AG04449 (cell line): ENCODE measurements at regions of chr6 and their contacts with region 1.

Region 1: GRCh38 chr6:152484806-152485205 is 152.4 kb downstream of the SYNE1 start:
- DNase-seq: no peak
- H3K4me3 ChIP-seq: no peak overlapping the region
- CTCF ChIP-seq: no peak

Region 2: GRCh38 chr6:152290693-152291092 is 194.1 kb before region 1 on chr6:
- CTCF ChIA-PET with region 1: no interaction called
- POLR2A ChIA-PET with region 1: no interaction called
- DNase-seq: no peak
- H3K4me3 ChIP-seq: no peak overlapping the region
- CTCF ChIP-seq: no peak

Region 3: DNA sequence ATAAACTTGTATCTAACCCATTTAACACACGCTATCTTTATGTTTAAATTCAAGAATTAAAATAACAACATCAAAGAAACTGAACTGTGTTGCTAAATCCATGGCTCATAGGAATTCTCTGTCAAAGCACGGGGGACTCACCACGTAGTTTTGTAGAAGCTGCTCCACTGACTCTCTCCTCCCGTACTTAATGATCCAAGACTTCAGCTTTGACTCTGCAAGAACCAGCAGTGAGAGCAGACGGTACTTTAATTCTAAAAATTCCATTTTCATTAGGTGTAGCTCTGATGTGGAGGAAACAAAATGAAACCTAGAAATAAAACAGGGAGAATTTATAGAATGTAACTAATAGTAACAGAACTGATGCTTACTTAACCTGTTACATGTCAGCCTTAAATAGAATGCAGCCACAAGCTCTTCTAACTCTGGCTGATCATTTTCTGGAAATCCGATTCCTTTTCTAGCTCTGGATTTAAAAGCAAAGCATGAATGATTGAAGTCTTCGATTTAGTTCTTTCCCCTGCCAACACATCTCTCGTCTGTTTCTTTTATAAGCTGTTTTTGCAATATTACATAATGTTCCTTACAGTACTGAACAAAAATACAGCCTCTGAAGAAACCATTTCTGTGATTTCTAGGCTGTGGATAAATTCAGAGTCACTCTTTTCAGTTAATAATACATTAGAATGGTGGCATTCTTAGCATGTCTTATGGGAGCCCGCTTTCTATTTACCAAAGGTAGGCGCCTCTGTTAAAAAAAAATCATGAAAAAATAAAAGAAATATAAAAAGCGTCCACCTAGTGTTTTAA is 13.1 kb before region 1 on chr6:
- CTCF ChIA-PET with region 1: interaction called, 20 read pairs
- POLR2A ChIA-PET with region 1: no interaction called
- DNase-seq: no peak
- H3K4me3 ChIP-seq: peak overlapping the region; percentile 10; the same call in 1 of the 2 replicates
- CTCF ChIP-seq: no peak

Region 4: GRCh38 chr6:152642989-152643388 is 158.2 kb after region 1 on chr6:
- CTCF ChIA-PET with region 1: interaction called, 54 read pairs
- POLR2A ChIA-PET with region 1: no interaction called
- DNase-seq: no peak
- H3K4me3 ChIP-seq: no peak overlapping the region
- CTCF ChIP-seq: peak; percentile 73

Region 5: DNA sequence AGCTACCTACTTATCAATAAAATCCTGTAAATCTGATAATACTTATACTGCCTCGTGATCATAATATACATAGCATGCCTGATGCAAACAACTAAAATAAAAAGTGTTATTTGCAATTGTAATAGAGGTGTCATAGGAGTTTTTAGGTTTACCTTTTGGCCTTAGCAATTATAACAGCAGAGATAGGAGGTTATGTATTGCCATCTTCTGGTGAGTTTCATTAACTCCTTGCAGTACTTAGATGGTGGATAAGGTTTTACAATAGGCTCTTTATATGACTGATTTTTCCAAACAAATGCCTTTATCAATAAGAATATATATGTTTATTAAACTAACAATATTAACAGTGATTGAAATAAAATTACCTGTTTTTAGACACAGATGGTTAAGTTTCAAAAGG is 185.1 kb after region 1 on chr6:
- CTCF ChIA-PET with region 1: interaction called, 36 read pairs
- POLR2A ChIA-PET with region 1: no interaction called
- DNase-seq: no peak
- H3K4me3 ChIP-seq: no peak overlapping the region
- CTCF ChIP-seq: peak; percentile 38

Region 6: GRCh38 chr6:152701081-152701862 is 216.5 kb after region 1 on chr6:
- CTCF ChIA-PET with region 1: interaction called, 24 read pairs
- POLR2A ChIA-PET with region 1: no interaction called
- DNase-seq: no peak
- H3K4me3 ChIP-seq: no peak overlapping the region
- CTCF ChIP-seq: no peak

Region 7: DNA sequence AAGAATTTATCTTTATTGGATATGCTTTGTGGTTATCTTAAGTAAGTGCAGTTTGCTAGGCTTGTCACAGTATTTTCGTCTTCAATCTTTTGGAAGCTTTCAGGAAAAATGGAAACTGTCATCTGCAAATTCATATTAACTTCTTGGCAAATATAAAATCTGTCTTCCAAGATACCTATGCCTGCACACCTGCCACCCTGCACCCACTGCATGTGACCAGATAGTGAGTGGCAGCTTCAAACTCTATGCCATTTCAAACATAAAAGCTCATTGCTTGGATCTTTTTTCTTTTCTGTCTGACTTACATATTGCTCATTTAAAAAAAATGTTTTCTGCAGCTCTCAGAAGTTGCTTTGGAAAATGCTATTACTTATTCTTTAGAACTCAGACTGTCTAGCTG is 1568.3 kb after region 1 on chr6:
- CTCF ChIA-PET with region 1: no interaction called
- POLR2A ChIA-PET with region 1: no interaction called
- DNase-seq: no peak
- H3K4me3 ChIP-seq: no peak overlapping the region
- CTCF ChIP-seq: no peak